ENCODE measurements at regions of chr1 and their contacts with region 1.

Region 1: GRCh38 chr1:168439456-168440375 is 104.1 kb downstream of the XCL2 start:
- DNase-seq: peak; percentile 35
- H3K4me3 ChIP-seq: peak overlapping the region; percentile 19
- H3K27me3 ChIP-seq: peaks cover 6% of the 10 kb centered on the region
- CTCF ChIP-seq: peak; percentile 85

Region 2: GRCh38 chr1:168421399-168422004 is 18.2 kb before region 1 on chr1:
- CTCF ChIA-PET with region 1: interaction called, 14 read pairs
- POLR2A ChIA-PET with region 1: no interaction called
- DNase-seq: no peak
- H3K4me3 ChIP-seq: no peak overlapping the region
- H3K27me3 ChIP-seq: no peaks in the 10 kb centered on the region
- CTCF ChIP-seq: no peak

Region 3: GRCh38 chr1:168452329-168452728 is 12.6 kb after region 1 on chr1:
- CTCF ChIA-PET with region 1: interaction called, 18 read pairs
- POLR2A ChIA-PET with region 1: interaction called, 3 read pairs
- DNase-seq: no peak
- H3K4me3 ChIP-seq: no peak overlapping the region
- H3K27me3 ChIP-seq: no peaks in the 10 kb centered on the region
- CTCF ChIP-seq: no peak

Region 4: GRCh38 chr1:168483539-168483938 is 43.8 kb after region 1 on chr1:
- CTCF ChIA-PET with region 1: interaction called, 17 read pairs
- POLR2A ChIA-PET with region 1: no interaction called
- DNase-seq: no peak
- H3K4me3 ChIP-seq: no peak overlapping the region
- H3K27me3 ChIP-seq: no peaks in the 10 kb centered on the region
- CTCF ChIP-seq: no peak

Region 5: GRCh38 chr1:168585191-168585590 is 145.5 kb after region 1 on chr1:
- CTCF ChIA-PET with region 1: interaction called, 38 read pairs
- POLR2A ChIA-PET with region 1: no interaction called
- DNase-seq: no peak
- H3K4me3 ChIP-seq: no peak overlapping the region
- H3K27me3 ChIP-seq: no peaks in the 10 kb centered on the region; the same call in 1 of the 2 replicates
- CTCF ChIP-seq: no peak

Measured in BJ (cell line).